HCT116 (cell line): ENCODE measurements at regions of chr2 and their contacts with region 1.

Region 1: GRCh38 chr2:142682528-142682927 is 194.9 kb upstream of the KYNU start:
- DNase-seq: peak; percentile 13
- ATAC-seq: no peak
- H3K4me3 ChIP-seq: no peak overlapping the region
- H3K27ac ChIP-seq: no peak overlapping the region
- H3K4me1 ChIP-seq: no peaks in the 10 kb centered on the region
- H3K27me3 ChIP-seq: no peaks in the 10 kb centered on the region
- CTCF ChIP-seq: peak in 1 of 3 experiments; percentile 36; a peak in 1 of 6 replicates
- POLR2A ChIP-seq: no peak
- RAD21 ChIP-seq: peak; percentile 53

Region 2: DNA sequence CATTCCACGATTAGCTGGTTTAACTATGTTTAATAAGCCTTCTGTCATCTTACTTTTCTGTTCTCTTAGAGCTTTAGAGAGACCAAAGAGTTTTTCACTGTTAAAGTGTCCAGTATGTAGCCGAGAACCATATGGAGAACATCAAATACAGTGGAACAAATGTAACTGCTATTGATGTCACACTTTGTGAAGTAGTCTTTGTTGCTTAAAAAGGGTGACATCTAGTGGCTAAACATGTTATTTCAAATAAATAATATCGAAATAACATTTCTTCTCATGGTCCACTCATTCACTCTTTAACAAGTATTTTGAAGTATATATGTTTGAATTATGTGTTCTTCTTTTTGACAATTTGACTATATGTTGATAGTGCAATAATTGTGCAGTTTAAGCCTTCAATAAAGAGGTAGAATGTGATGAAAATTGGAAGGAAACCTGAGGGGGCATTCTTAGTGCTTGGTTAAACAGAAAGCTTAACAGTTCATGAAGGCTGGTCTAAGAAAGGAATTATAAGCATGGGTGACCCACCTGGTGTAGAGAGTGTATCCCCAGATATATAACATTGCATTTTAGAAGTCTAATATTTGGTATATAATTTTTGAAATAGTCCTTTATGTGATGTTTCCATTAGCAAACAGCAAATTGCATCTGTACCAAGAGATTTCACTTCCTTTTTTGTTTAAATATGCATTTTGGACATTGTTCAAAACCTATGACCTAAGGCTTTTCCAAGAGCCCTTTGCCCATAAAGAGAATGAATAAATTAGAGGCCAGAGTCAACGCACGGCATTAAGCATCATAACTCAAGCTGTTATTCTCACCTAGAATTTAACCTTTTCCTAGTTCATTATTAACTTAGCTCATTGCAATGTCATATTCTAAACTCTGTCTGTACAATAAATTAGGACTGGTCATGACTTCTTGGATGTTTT is 307.0 kb after region 1 on chr2:
- CTCF ChIA-PET with region 1: interaction called, 8 read pairs
- POLR2A ChIA-PET with region 1: no interaction called
- RAD21 ChIA-PET with region 1: no interaction called
- intact Hi-C with region 1: loop called (anchors 2 kb)
- DNase-seq: peak; percentile 24
- ATAC-seq: peak; percentile 70
- H3K4me3 ChIP-seq: no peak overlapping the region
- H3K27ac ChIP-seq: no peak overlapping the region
- H3K4me1 ChIP-seq: no peaks in the 10 kb centered on the region
- H3K27me3 ChIP-seq: no peaks in the 10 kb centered on the region
- CTCF ChIP-seq: peak in 2 of 3 experiments; percentile 32 to 58; a peak in 3 of 6 replicates
- POLR2A ChIP-seq: no peak
- RAD21 ChIP-seq: peak; percentile 61